Psoas muscle (tissue), 8 donors: ENCODE measurements at regions of chr9 and their contacts with region 1.

Region 1: DNA sequence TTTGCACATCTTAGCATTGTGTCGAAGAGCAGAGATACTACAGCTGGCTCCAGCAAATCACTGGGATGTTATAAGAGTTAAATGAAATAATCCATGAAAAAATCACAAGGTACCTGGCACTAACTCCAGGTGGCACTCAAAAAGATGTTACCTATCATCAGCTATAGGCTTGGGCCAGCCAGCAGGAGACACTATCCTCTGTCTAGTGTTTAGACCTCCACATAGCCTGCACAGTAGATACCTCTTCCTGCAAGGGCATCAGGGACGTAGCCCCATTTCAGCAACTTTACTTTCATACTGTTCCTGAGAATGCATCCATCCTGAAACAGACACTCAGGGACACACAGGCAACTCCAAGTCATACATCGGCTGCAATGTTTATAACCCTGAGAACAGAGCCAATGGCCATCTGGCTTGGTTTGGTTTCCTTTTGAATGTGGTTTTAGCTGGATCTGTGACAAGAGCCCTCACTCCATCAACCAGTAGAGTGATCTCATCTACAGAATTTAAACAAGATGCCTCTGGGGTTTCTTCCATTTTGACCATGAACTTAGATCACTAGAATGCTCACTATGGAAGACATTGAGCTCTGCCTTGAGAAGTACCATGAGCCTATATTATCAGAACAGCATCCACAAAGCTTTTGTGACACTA is 69.9 kb downstream of the TLE1 start:
- DNase-seq: no peak
- ATAC-seq: peak in 1 of 4 donors; percentile 13
- H3K4me3 ChIP-seq: no peak overlapping the region
- H3K27ac ChIP-seq: peak overlapping the region; percentile 38
- H3K4me1 ChIP-seq: peaks cover 17% of the 10 kb centered on the region
- H3K27me3 ChIP-seq: no peaks in the 10 kb centered on the region
- CTCF ChIP-seq: no peak

Region 2: GRCh38 chr9:81477669-81478068 is 141.8 kb before region 1 on chr9:
- intact Hi-C with region 1: no loop called
- DNase-seq: no peak
- ATAC-seq: no peak
- H3K4me3 ChIP-seq: no peak overlapping the region
- H3K27ac ChIP-seq: no peak overlapping the region
- H3K4me1 ChIP-seq: peaks cover 36% of the 10 kb centered on the region
- H3K27me3 ChIP-seq: no peaks in the 10 kb centered on the region
- CTCF ChIP-seq: no peak

Region 3: DNA sequence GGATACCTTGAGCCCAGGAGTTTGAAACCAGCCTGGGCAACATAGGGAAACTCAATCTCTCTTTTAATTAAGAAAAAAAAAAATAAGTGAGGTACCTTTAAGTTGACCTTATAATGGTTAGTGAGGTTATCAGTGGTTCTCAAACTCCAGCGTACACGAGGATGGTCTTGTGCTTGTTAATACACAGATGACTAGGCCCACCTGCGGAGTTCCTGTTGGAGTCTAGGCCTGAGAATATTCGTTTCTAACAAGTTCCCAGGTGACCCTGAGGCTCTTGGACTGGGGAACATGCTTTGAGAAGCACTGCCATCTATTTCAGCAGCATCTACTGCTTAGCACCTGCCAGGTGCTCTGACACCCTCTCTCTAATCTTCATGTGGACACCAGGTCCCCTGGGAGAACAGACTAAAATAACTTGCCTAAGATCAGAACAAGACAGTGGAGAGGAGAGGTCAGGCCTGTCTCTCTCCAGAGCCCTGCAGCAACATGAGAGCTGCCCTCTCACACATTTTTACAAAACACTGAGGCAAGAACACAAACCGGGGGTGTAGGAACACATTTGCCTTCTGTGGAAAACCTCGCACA is 45.3 kb after region 1 on chr9:
- intact Hi-C with region 1: loop called in 1 of 2 experiments (anchors 5 kb)
- DNase-seq: no peak
- ATAC-seq: peak; percentile 47 to 80 (median 68)
- H3K4me3 ChIP-seq: peak overlapping the region; percentile 23
- H3K27ac ChIP-seq: peak overlapping the region; percentile 53
- H3K4me1 ChIP-seq: peaks cover 59% of the 10 kb centered on the region
- H3K27me3 ChIP-seq: no peaks in the 10 kb centered on the region
- CTCF ChIP-seq: no peak